Heart left ventricle (tissue), 16 donors: ENCODE measurements at regions of chr2 and their contacts with region 1.

Region 1: GRCh38 chr2:231900486-231900942 is 25.7 kb downstream of the NPPC start:
- DNase-seq: peak; percentile 47 to 89 (median 75)
- ATAC-seq: peak in 3 of 4 donors; percentile 72 to 85 (median 73)
- H3K4me3 ChIP-seq: no peak overlapping the region
- H3K27ac ChIP-seq: no peak overlapping the region
- H3K4me1 ChIP-seq: no peaks in the 10 kb centered on the region
- H3K27me3 ChIP-seq: peaks cover 0 to 10% (median 0%) of the 10 kb centered on the region in 9 donors
- CTCF ChIP-seq: peak; percentile 56 to 86 (median 72)
- POLR2A ChIP-seq: no peak

Region 2: DNA sequence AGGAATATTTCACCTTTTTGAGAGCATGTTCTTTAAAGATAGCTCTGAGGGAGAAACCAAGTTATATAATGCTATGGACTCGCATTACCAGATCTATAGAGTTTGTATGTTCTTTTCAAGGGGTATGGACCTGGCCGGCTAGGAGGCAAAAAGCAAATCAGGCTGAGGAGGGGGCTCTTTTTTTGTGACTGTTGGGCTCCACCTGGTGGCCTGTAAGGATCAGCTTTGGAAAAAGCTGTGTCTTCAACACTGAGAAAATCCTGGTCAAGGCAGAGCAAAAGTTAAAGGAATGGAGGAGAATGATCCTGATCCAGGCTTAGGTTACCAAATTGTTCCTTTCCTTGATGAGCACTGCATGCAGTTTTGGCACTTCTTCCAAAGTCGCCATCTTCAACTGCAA is 241.5 kb after region 1 on chr2:
- intact Hi-C with region 1: loop called in 1 of 10 experiments (anchors 5 kb)
- DNase-seq: peak in 4 of 5 donors; percentile 17 to 38 (median 28)
- ATAC-seq: peak in 3 of 4 donors; percentile 48 to 65 (median 53)
- H3K4me3 ChIP-seq: no peak overlapping the region
- H3K27ac ChIP-seq: no peak overlapping the region
- H3K4me1 ChIP-seq: peaks cover 0 to 14% (median 2%) of the 10 kb centered on the region in 12 donors
- H3K27me3 ChIP-seq: no peaks in the 10 kb centered on the region
- CTCF ChIP-seq: peak; percentile 36 to 75 (median 68)
- POLR2A ChIP-seq: no peak

Region 3: DNA sequence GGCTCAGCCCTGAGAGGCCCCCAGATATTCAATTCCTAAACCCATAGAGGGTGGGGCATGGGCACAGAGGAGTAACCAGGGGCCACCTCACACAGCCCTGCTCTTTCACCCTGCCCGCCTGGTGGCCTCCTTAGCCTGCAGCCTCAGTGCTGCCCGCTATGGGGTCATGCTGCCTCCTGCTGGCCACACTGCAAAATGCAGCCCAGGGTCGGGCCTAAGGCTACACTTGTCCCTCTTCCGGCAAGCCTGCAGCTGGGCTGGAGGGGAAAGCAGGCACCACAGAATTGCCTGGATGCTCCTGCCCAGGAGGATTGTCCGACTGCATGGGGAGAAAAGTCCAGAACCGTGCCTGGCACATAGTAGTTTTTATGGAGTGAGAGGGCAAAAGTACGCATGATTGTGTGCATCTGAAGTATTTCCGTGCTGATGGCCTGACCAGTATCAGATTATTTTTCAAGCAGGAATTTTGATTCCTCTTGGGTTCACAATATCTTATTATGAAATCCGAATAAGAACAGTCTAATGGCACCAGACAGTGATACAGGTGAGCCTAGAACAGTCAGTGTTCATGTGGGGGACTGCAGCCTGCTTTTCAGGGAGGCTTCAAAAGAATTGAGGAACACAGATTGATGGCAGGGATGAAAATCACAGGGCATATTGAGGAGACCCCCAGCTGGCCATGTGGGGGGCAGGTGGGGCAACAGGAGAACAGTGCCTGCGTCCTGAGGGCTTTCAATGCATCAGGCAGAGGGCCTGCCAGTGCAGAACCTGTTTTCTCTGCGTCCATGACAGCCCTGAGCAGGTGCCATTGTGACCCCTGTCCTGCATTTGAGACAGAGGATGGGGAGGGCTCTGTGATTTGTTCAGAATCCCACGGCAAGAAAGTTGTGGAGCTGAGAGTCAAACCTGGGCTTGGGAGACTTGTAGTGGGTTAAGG is 426.9 kb after region 1 on chr2:
- intact Hi-C with region 1: loop called in 7 of 10 experiments (anchors 5 kb)
- DNase-seq: peak; percentile 52 to 87 (median 62)
- ATAC-seq: peak; percentile 16 to 69 (median 60)
- H3K4me3 ChIP-seq: no peak overlapping the region
- H3K27ac ChIP-seq: no peak overlapping the region
- H3K4me1 ChIP-seq: peaks cover 0 to 8% (median 0%) of the 10 kb centered on the region in 12 donors
- H3K27me3 ChIP-seq: no peaks in the 10 kb centered on the region
- CTCF ChIP-seq: peak; percentile 65 to 86 (median 72)
- POLR2A ChIP-seq: no peak

Region 4: GRCh38 chr2:232438951-232439757 is 538.6 kb after region 1 on chr2:
- intact Hi-C with region 1: loop called in 7 of 10 experiments (anchors 2 to 5 kb)
- DNase-seq: peak in 1 of 5 donors; percentile 60
- ATAC-seq: peak; percentile 30 to 58 (median 56)
- H3K4me3 ChIP-seq: no peak overlapping the region
- H3K27ac ChIP-seq: no peak overlapping the region
- H3K4me1 ChIP-seq: peaks cover 0 to 4% (median 0%) of the 10 kb centered on the region in 12 donors
- H3K27me3 ChIP-seq: peaks cover 0 to 6% (median 0%) of the 10 kb centered on the region in 9 donors
- CTCF ChIP-seq: peak; percentile 40 to 68 (median 54)
- POLR2A ChIP-seq: no peak

Region 5: DNA sequence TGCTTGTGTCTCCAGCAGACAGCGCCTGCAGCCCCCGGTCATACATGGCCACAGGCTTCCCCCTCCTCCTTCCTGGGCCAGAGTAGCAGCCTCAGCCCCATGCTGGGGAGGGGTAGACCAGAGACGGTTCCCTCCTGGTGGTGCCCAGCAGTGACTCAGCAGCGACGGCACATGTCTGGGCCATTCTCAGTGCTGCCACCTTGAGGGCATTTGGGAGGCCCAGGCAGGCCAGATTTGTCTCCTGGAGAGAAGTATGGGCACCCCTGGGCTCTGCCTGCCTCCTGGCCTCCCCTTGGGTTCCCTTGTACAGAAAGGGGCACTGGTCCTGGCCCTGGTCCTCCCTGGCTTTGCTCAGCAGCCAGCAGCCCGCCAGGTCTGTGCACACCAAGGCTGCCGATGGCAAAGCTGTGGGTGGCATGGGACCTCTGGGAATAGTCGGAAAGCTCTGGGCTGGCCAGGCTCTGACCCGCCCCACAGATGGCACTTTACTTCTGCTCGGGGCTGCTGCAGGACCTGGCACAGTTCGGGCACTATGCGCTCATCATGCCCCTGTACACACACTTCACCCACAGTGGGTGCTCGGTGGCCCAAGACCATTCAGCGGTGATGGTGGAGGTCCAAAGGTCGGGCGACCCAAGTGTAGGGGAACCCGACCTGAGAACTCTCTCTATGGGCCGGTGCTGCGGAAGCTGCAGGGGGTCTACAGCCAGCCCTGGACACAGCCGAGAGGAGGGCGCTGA is 544.1 kb after region 1 on chr2:
- intact Hi-C with region 1: loop called in 6 of 10 experiments (anchors 5 kb)
- DNase-seq: peak in 1 of 5 donors; percentile 55
- ATAC-seq: no peak
- H3K4me3 ChIP-seq: no peak overlapping the region
- H3K27ac ChIP-seq: no peak overlapping the region
- H3K4me1 ChIP-seq: peaks cover 0 to 4% (median 0%) of the 10 kb centered on the region in 12 donors
- H3K27me3 ChIP-seq: no peaks in the 10 kb centered on the region
- CTCF ChIP-seq: peak; percentile 14 to 66 (median 37)
- POLR2A ChIP-seq: no peak

Region 6: DNA sequence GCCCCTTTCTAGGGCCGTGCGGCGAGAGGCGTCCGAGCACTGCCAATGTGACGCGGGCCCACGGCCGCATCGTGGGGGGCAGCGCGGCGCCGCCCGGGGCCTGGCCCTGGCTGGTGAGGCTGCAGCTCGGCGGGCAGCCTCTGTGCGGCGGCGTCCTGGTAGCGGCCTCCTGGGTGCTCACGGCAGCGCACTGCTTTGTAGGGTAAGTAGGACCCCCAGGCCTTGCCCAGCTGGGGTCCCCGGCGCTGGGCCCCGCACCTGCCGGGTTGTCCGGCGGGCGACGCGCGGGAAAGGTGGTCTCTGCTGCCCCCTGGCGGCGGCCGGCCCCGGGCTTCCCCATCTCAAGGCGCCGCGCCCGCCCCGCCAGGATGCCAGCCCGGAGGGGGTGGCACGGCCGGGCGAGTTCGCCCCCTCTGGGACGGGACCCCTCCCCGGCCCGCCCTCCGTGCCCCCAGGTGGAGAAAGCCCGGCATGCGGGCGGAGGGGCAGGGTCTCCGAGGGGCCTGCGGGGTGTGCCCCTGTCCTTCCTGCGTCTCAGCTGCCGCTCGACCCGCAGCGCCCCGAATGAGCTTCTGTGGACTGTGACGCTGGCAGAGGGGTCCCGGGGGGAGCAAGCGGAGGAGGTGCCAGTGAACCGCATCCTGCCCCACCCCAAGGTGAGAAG is 621.6 kb after region 1 on chr2:
- intact Hi-C with region 1: loop called in 8 of 10 experiments (anchors 5 to 10 kb)
- DNase-seq: peak; percentile 39 to 83 (median 52)
- ATAC-seq: peak in 2 of 4 donors; percentile 35 to 61
- H3K4me3 ChIP-seq: peak overlapping the region in 10 of 12 donors; percentile 3 to 40 (median 16)
- H3K27ac ChIP-seq: no peak overlapping the region
- H3K4me1 ChIP-seq: peaks cover 0 to 44% (median 21%) of the 10 kb centered on the region in 12 donors
- H3K27me3 ChIP-seq: peaks cover 30 to 72% (median 47%) of the 10 kb centered on the region in 9 donors
- CTCF ChIP-seq: peak; percentile 79 to 96 (median 90)
- POLR2A ChIP-seq: no peak